ENCODE measurements at regions of chr1 and their contacts with region 1.

Region 1: DNA sequence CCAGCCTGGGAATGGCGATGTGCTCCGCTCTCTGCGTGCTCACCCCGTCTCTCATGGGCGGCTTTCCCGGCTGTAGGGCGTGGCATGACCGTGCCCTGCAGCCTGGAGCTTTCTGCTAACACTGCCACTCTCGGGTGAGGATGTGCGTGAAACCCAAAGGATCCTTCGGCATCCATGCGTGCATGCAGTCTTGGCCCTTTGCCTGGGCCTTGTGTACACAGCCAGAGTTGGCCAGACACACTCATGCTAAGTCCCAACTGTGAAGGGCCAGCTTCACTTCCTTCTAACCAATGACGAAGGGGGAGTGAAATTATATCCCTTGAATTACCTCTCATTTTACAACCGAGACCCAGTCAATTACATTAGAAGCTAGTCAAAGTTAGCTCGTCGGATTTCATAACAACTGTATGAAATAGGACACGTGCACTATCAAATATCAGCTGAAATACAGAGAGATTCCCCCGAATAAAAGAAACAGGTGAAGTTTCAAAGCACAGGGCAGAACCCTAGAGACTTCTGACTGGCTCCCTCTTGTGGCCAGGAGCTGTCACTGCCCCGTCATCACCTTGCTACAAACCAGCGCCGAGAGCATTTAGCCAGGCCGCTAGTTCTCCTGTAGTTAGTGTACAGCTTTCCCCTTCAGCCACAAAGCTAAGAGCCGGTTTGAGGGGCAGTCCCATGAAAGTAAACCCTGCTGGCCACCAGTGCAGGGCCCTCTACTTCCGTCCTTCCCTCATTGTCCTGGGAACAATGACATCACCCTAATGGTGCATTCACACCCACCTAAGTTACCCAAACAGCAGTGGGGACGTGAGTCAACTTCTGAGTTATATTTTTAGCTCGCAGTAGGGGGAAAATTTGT is 63.4 kb upstream of the COA6 start:
- DNase-seq: peak; percentile 47 to 84
- H3K4me3 ChIP-seq: no peak overlapping the region
- H3K27ac ChIP-seq: no peak overlapping the region
- H3K4me1 ChIP-seq: peaks cover 0 to 5% (median 2%) of the 10 kb centered on the region in 4 experiments; a peak in 4 of 7 replicates
- H3K27me3 ChIP-seq: no peaks in the 10 kb centered on the region
- CTCF ChIP-seq: peak; percentile 87 to 92 (median 92)
- EP300 ChIP-seq: no peak
- POLR2A ChIP-seq: no peak
- RAD21 ChIP-seq: peak; percentile 79 to 85

Region 2: GRCh38 chr1:234125283-234125682 is 184.5 kb before region 1 on chr1:
- CTCF ChIA-PET with region 1: interaction called, 76 read pairs
- POLR2A ChIA-PET with region 1: no interaction called
- DNase-seq: peak; percentile 56 to 82
- H3K4me3 ChIP-seq: no peak overlapping the region
- H3K27ac ChIP-seq: no peak overlapping the region
- H3K4me1 ChIP-seq: 0 out of 7 replicates have a peak, but pooled peaks cover 0 to 2% (median 0%) of the 10 kb centered on the region in 4 experiments
- H3K27me3 ChIP-seq: no peaks in the 10 kb centered on the region
- CTCF ChIP-seq: peak; percentile 79 to 94 (median 89)
- EP300 ChIP-seq: no peak
- POLR2A ChIP-seq: no peak
- RAD21 ChIP-seq: peak; percentile 96 to 97

Region 3: DNA sequence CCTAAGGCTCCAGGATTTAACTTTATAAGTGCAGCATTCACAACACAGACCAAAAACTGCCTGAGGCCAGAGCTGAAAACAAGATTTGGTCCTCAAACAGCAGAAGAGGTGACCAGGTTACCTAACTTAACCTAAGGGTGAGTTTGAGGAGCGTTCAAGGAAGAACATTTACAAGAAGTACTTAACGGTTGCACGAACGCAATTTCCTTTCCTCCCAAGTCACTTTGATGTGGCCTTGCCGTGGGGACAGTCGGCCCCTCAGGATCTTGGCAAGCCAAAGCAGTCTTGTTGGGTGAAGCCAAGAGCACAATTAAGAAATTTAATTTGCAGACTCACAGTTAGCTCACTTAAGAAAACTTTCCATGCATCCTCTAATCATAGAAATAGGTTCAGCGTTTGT is 139.2 kb before region 1 on chr1:
- CTCF ChIA-PET with region 1: interaction called, 13 read pairs
- POLR2A ChIA-PET with region 1: no interaction called
- DNase-seq: no peak
- H3K4me3 ChIP-seq: no peak overlapping the region
- H3K27ac ChIP-seq: no peak overlapping the region
- H3K4me1 ChIP-seq: no peaks in the 10 kb centered on the region; a peak in 3 of 7 replicates
- H3K27me3 ChIP-seq: no peaks in the 10 kb centered on the region
- CTCF ChIP-seq: no peak
- EP300 ChIP-seq: no peak
- POLR2A ChIP-seq: no peak
- RAD21 ChIP-seq: no peak

Region 4: GRCh38 chr1:234222561-234223280 is 87.1 kb before region 1 on chr1:
- CTCF ChIA-PET with region 1: interaction called, 170 read pairs
- POLR2A ChIA-PET with region 1: no interaction called
- DNase-seq: no peak
- H3K4me3 ChIP-seq: no peak overlapping the region
- H3K27ac ChIP-seq: no peak overlapping the region
- H3K4me1 ChIP-seq: peaks cover 2 to 10% (median 8%) of the 10 kb centered on the region in 4 experiments; a peak in 6 of 7 replicates
- H3K27me3 ChIP-seq: no peaks in the 10 kb centered on the region; a peak in 1 of 7 replicates
- CTCF ChIP-seq: no peak
- EP300 ChIP-seq: no peak
- POLR2A ChIP-seq: no peak
- RAD21 ChIP-seq: no peak

Region 5: DNA sequence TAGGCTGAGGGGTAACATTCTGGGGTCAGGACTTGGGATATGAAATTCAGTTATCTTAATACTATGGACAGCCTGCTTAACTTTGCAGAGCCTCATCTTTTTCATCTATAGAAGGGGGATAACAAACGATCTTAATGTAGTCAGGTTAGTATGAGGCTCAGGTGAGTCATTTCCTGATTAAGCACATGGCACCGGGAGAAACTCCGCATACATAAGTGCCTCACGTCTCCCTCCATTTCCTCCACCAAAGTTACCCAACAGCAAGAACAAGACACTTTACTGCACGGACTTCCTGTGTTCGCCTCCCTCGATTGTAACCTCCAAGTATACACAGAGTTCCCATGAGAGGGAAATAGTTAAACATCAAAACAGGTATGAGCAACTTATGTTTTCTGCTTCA is 49.3 kb before region 1 on chr1:
- CTCF ChIA-PET with region 1: interaction called, 17 read pairs
- POLR2A ChIA-PET with region 1: no interaction called
- DNase-seq: no peak
- H3K4me3 ChIP-seq: no peak overlapping the region
- H3K27ac ChIP-seq: no peak overlapping the region
- H3K4me1 ChIP-seq: peaks cover 0 to 5% (median 0%) of the 10 kb centered on the region in 4 experiments; a peak in 2 of 7 replicates
- H3K27me3 ChIP-seq: no peaks in the 10 kb centered on the region; a peak in 1 of 7 replicates
- CTCF ChIP-seq: no peak
- EP300 ChIP-seq: no peak
- POLR2A ChIP-seq: no peak
- RAD21 ChIP-seq: no peak

Region 6: GRCh38 chr1:234295068-234295467 is 14.8 kb before region 1 on chr1:
- CTCF ChIA-PET with region 1: interaction called, 79 read pairs
- POLR2A ChIA-PET with region 1: no interaction called
- DNase-seq: no peak
- H3K4me3 ChIP-seq: no peak overlapping the region
- H3K27ac ChIP-seq: no peak overlapping the region
- H3K4me1 ChIP-seq: peaks cover 0 to 3% (median 0%) of the 10 kb centered on the region in 4 experiments; a peak in 1 of 7 replicates
- H3K27me3 ChIP-seq: no peaks in the 10 kb centered on the region
- CTCF ChIP-seq: no peak
- EP300 ChIP-seq: no peak
- POLR2A ChIP-seq: no peak
- RAD21 ChIP-seq: no peak